ENCODE measurements at regions of chr11 and their contacts with region 1.

Region 1: DNA sequence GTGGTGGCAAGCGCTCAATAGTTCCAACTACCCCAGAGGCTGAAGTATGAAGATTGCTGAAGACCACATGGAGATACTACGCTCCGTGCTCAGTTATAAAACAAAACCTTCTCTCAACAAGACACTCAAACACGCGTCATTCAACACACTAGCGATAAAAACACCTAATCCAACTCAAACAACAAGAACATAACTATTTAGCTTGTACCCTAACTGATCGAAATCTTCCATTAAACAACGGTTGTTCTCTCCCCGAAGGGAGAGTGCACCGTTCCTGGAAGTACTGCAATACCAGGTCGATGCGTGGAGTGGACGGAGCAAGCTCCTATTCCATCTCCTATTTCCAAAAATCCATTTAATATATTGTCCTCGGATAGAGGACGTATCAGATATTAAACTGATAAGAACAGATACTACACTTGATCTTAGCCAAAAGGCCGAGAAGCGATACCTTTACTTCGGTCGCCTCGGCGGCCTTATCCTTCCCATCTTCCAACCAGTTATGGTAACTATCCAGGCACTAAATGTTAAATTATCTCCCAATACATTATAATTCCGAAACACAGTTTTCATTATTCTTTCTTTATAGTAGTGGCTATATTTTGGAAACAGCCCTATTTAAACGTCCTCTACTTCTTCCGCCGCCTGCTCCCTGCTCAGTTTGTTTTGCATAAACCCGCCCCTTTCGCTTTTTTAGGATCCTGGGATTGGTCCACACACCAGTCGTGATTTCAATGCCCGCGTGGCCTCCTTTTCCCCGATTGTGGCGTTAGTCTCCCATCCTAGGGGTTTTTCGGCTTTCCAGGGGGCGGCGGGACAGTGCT is 2.2 kb upstream of the WDR74 start:
- DNase-seq: peak; percentile 79
- ATAC-seq: peak; percentile 72
- H3K4me3 Mint-ChIP-seq: no peak overlapping the region
- H3K27ac Mint-ChIP-seq: no peak overlapping the region
- H3K4me1 Mint-ChIP-seq: peaks cover 28% of the 10 kb centered on the region
- H3K27me3 Mint-ChIP-seq: no peaks in the 10 kb centered on the region
- CTCF ChIP-seq: no peak

Region 2: GRCh38 chr11:62431171-62431901 is 410.2 kb before region 1 on chr11:
- CTCF ChIA-PET with region 1: no interaction called
- POLR2A ChIA-PET with region 1: no interaction called
- intact Hi-C with region 1: no loop called
- DNase-seq: no peak
- ATAC-seq: no peak
- H3K4me3 Mint-ChIP-seq: no peak overlapping the region
- H3K27ac Mint-ChIP-seq: no peak overlapping the region
- H3K4me1 Mint-ChIP-seq: peaks cover 48% of the 10 kb centered on the region
- H3K27me3 Mint-ChIP-seq: no peaks in the 10 kb centered on the region
- CTCF ChIP-seq: no peak

Region 3: GRCh38 chr11:62444236-62444833 is 397.2 kb before region 1 on chr11:
- CTCF ChIA-PET with region 1: no interaction called
- POLR2A ChIA-PET with region 1: interaction called, 13 read pairs
- intact Hi-C with region 1: no loop called
- DNase-seq: peak; percentile 58
- ATAC-seq: peak; percentile 86
- H3K4me3 Mint-ChIP-seq: peak overlapping the region; percentile 83
- H3K27ac Mint-ChIP-seq: peak overlapping the region; percentile 95
- H3K4me1 Mint-ChIP-seq: peaks cover 29% of the 10 kb centered on the region
- H3K27me3 Mint-ChIP-seq: no peaks in the 10 kb centered on the region
- CTCF ChIP-seq: no peak

Region 4: GRCh38 chr11:62612366-62613290 is 228.9 kb before region 1 on chr11 and contains the starts of genes EML3 and ROM1:
- CTCF ChIA-PET with region 1: no interaction called
- POLR2A ChIA-PET with region 1: interaction called, 13 read pairs
- intact Hi-C with region 1: loop called (anchors 5 kb)
- DNase-seq: peak; percentile 95
- ATAC-seq: peak; percentile 82
- H3K4me3 Mint-ChIP-seq: peak within 1 kb of the TSS; percentile 93
- H3K27ac Mint-ChIP-seq: peak within 1 kb of the TSS; percentile 95
- H3K4me1 Mint-ChIP-seq: peaks cover 27% of the 10 kb centered on the region
- H3K27me3 Mint-ChIP-seq: no peaks in the 10 kb centered on the region
- CTCF ChIP-seq: peak; percentile 59
- total RNA-seq, gene EML3: 115 and 128 TPM in 2 replicates
- total RNA-seq, gene ROM1: 0.89 and 2.6 TPM in 2 replicates

Region 5: GRCh38 chr11:62665075-62665598 is 176.4 kb before region 1 on chr11 and contains the starts of genes C11orf98 and CSKMT:
- CTCF ChIA-PET with region 1: interaction called, 3 read pairs
- POLR2A ChIA-PET with region 1: interaction called, 54 read pairs
- intact Hi-C with region 1: loop called (anchors 5 kb)
- DNase-seq: peak; percentile 95
- ATAC-seq: peak; percentile 89
- H3K4me3 Mint-ChIP-seq: peak within 1 kb of the TSS; percentile 97
- H3K27ac Mint-ChIP-seq: peak within 1 kb of the TSS; percentile 88
- H3K4me1 Mint-ChIP-seq: peaks cover 45% of the 10 kb centered on the region
- H3K27me3 Mint-ChIP-seq: no peaks in the 10 kb centered on the region
- CTCF ChIP-seq: no peak
- total RNA-seq, gene C11orf98: 107 and 120 TPM in 2 replicates
- total RNA-seq, gene CSKMT: 50.5 and 52.1 TPM in 2 replicates

Region 6: DNA sequence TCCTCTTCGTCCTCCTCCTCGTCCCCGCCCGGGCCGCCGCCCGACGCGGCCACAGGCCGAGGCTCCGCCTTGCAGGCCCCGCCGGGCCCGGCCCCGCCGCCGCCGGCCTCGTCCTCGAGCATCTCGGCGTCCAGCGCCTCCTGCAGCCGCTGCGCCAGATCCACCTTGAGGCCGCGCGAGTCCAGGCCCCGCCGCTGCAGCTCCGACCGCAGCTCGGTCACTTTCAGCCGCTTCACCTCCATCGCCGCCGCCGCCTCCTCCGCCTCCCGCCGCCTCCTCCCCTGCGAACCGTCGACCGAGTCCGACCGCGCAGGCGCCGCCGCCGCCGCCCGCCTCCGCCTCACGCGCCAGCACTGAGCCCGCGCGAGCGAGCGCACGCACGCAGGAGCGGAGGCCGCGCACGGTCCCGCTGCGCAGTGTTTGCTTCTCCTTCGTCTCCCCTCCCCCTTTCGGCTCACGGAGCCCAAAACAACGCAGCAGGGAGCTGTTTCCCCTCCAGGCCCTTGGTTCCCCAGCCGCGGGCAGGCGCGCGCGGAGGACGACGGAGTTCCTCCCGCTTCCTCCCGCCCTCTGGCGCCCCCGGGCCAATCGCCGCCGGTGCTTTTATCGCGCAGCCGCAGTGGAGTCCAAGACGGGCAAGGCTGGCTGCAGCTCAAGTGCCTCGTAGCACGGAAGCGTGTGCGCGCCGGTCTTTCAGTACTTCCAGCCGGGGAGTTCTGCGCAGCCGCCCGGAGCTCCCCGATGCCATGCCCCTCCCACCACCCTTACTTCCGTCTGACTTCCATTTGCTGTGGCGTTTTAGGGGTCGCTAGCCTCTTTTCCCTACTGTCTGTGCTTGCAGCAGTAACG is 114.4 kb before region 1 on chr11 and contains the start of gene HNRNPUL2:
- CTCF ChIA-PET with region 1: interaction called, 3 read pairs
- POLR2A ChIA-PET with region 1: interaction called, 179 read pairs
- intact Hi-C with region 1: loop called (anchors 1 kb)
- DNase-seq: peak; percentile 97
- ATAC-seq: peak; percentile 84
- H3K4me3 Mint-ChIP-seq: peak within 1 kb of the TSS; percentile 98
- H3K27ac Mint-ChIP-seq: peak within 1 kb of the TSS; percentile 98
- H3K4me1 Mint-ChIP-seq: peaks cover 55% of the 10 kb centered on the region
- H3K27me3 Mint-ChIP-seq: no peaks in the 10 kb centered on the region
- CTCF ChIP-seq: no peak
- total RNA-seq, gene HNRNPUL2: 58.2 and 63.9 TPM in 2 replicates

Region 7: DNA sequence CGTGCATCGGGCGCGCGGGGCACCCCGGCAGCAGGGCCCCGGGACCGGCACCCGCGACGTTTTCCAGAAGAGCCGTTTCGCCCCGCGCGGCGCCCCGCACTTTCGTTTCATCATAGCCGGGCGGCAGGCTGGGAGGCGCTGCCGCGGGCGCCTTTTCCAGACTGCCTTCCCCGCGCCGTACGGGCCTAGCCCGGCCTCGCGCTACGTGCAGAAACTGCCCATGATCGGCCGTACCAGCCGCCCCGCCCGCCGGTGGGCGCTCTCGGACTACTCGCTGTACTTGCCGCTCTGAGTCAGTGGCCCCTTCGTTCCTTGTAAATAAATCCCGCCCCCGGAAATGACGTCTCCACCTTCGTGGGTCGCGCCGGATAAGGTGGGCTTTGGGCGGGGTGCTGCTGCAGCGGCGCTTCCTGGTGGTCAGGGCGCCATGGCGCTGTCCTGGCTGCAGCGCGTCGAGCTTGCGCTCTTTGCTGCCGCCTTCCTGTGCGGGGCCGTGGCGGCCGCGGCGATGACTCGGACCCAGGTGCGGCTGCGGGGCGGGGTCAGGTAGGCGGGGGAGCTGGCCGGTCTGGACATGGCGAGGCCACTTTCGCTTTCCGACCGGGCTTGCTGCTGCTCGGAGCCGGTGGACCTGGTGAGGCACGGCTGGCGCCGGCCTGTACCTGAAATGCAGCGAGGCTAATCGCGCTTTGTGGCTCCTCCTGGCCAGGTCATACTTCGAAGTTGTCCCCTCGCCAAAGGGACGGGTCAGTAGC is 54.4 kb before region 1 on chr11 and contains the start of gene TMEM179B:
- CTCF ChIA-PET with region 1: interaction called, 28 read pairs
- POLR2A ChIA-PET with region 1: interaction called, 308 read pairs
- intact Hi-C with region 1: loop called (anchors 1 kb)
- DNase-seq: peak; percentile 87
- ATAC-seq: peak; percentile 71
- H3K4me3 Mint-ChIP-seq: peak within 1 kb of the TSS; percentile 92
- H3K27ac Mint-ChIP-seq: peak within 1 kb of the TSS; percentile 89
- H3K4me1 Mint-ChIP-seq: peaks cover 42% of the 10 kb centered on the region
- H3K27me3 Mint-ChIP-seq: no peaks in the 10 kb centered on the region
- CTCF ChIP-seq: peak; percentile 66
- total RNA-seq, gene TMEM179B: 34.9 and 47.7 TPM in 2 replicates

Region 8: GRCh38 chr11:62860835-62861563 is 19.4 kb after region 1 on chr11:
- CTCF ChIA-PET with region 1: interaction called, 3 read pairs
- POLR2A ChIA-PET with region 1: interaction called, 597 read pairs
- intact Hi-C with region 1: no loop called
- DNase-seq: no peak
- ATAC-seq: no peak
- H3K4me3 Mint-ChIP-seq: no peak overlapping the region
- H3K27ac Mint-ChIP-seq: no peak overlapping the region
- H3K4me1 Mint-ChIP-seq: peaks cover 24% of the 10 kb centered on the region
- H3K27me3 Mint-ChIP-seq: no peaks in the 10 kb centered on the region
- CTCF ChIP-seq: no peak

Region 9: DNA sequence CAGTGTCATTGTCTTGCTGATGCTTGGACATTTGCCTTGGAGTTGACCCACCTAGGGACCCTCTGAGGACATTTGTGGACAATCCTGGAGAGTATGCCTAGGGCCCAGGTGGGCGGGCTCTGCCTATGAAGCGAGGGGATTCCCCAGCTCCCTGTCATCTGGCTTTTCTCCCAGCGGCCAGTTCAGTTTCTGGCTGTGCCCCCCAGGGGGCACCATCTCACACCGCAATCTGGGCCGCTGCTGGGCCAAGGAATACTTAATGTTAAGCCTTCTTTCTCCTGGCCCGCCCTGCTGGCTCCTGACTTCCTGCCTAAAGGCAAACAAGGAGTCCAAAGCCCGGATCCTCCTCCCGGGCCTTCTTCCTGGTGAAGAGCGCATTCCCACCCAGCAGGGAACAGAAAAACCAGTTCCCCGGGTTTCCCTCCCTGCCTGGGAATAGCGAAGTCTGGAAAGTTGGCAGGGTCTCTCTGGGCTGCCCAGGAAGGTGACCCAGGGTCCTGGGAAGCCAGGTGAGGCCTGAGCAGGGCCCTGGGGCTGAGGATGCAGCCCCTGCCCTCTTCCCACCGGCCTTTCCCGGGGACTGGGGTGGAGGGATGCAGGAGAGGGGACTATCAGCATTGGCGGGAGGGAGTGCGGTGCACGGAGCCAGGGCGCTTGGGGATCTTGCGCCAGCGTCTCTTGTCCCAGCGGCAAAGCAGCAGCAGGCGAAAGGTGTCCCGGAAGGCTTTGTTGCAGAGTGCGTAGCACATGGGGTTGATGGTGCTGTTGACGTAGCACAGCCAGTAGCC is 67.7 kb after region 1 on chr11:
- CTCF ChIA-PET with region 1: no interaction called
- POLR2A ChIA-PET with region 1: no interaction called
- intact Hi-C with region 1: no loop called
- DNase-seq: no peak
- ATAC-seq: peak; percentile 47
- H3K4me3 Mint-ChIP-seq: no peak overlapping the region
- H3K27ac Mint-ChIP-seq: no peak overlapping the region
- H3K4me1 Mint-ChIP-seq: no peaks in the 10 kb centered on the region
- H3K27me3 Mint-ChIP-seq: peaks cover 30% of the 10 kb centered on the region
- CTCF ChIP-seq: no peak

Measured in activated B cell treated with CpG ODN at 0.5 μM for 24 hours (primary cell).